K562 (cell line): ENCODE measurements at regions of chr9 and their contacts with region 1.

Region 1: DNA sequence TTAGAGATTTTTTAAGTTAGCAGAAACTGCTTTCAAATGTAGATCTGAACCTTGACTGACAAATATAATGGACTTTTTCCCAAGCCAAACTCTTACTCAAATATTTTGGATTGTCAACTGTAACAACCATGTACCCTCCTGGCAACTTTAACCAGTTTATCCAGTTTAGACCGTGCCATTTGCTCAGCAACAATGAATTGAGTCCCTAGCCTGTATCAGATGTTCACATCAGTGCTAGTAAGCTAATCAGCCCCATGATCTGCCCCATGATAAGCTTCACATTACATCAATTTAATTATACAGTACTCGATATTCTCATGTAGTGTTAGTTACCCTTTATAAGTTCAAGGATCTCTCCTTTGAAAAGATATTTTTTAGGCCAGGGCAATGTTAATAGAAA is 276.4 kb upstream of the TRPM3 start:
- DNase-seq: no peak
- ATAC-seq: no peak
- H3K4me3 ChIP-seq: no peak overlapping the region
- H3K27ac ChIP-seq: no peak overlapping the region
- H3K4me1 ChIP-seq: no peaks in the 10 kb centered on the region
- H3K27me3 ChIP-seq: no peaks in the 10 kb centered on the region
- CTCF ChIP-seq: no peak
- EP300 ChIP-seq: no peak
- POLR2A ChIP-seq: no peak
- RAD21 ChIP-seq: no peak

Region 2: DNA sequence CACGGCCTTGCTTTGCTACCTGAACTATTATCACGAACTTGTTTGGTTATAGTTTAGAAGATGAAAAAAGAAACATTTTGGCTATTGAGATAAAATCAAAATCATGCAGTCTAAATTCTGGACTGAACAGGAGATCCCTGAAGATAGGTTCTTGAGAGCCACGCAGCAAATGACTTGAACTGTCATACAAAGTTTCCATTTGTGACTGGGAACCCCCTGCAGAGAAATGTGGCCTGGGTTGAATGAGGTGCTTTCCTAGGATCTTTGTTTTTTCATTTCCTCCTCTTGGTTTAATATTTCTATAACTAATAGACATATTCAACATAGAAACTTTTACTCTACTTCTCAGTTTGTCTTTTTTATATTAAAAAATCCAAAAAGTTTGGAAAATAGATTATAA is 91.7 kb before region 1 on chr9:
- CTCF ChIA-PET with region 1: no interaction called
- POLR2A ChIA-PET with region 1: no interaction called
- in situ Hi-C with region 1: no loop called
- intact Hi-C with region 1: loop called (anchors 10 kb)
- DNase-seq: no peak
- ATAC-seq: no peak
- H3K4me3 ChIP-seq: no peak overlapping the region
- H3K27ac ChIP-seq: no peak overlapping the region
- H3K4me1 ChIP-seq: no peaks in the 10 kb centered on the region
- H3K27me3 ChIP-seq: no peaks in the 10 kb centered on the region
- CTCF ChIP-seq: no peak
- EP300 ChIP-seq: no peak
- POLR2A ChIP-seq: no peak
- RAD21 ChIP-seq: no peak

Region 3: GRCh38 chr9:71353720-71354119 is 44.1 kb before region 1 on chr9:
- CTCF ChIA-PET with region 1: no interaction called
- POLR2A ChIA-PET with region 1: no interaction called
- in situ Hi-C with region 1: no loop called
- intact Hi-C with region 1: no loop called
- DNase-seq: no peak
- ATAC-seq: no peak
- H3K4me3 ChIP-seq: no peak overlapping the region
- H3K27ac ChIP-seq: no peak overlapping the region
- H3K4me1 ChIP-seq: no peaks in the 10 kb centered on the region
- H3K27me3 ChIP-seq: no peaks in the 10 kb centered on the region
- CTCF ChIP-seq: no peak
- EP300 ChIP-seq: no peak
- POLR2A ChIP-seq: no peak
- RAD21 ChIP-seq: no peak

Region 4: DNA sequence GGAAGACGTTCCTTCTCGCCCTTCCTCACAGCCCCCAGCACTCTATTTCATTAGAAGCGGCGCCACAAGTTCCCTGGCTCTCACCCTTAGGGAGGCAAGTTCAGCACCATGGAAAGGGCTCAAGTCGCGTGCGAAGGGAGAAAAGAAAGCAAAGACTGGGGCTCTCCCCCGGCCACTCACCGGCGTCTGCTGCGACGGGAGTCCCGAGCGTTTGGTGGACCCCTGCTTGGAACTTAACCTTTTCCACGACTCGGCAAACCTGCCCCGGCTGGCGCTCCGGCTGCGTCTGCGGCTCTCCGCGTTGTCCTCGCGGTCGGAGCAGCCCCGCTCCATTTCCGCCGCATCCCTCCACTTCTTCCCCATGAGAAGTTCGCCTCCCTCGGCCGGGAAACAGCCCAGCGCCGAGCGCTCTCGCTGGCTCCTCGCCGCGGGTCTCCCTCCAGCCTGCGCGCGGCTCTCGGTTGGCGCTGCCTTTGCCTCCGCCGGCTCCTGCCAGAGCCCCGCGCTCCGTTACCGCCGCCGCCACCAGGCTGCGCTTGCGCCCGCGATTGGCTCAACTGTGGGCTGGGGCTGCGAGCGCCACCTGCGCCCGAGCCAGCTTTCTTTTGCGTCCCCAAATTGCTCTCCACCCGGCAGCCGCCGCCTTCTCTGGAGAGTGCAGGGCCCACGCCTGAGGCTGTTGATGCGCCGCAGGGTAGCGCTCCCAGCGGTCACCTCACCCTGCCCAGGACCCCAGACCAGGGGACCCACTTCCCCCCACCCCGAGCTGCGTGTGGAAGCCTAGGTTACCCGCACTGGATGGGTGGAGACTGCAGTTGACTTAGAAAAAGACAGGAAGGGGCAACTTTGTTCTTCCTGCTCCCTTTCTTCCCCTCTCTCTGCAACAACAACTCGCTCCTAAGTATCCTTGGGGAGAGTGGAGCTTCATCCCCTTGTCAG is 48.9 kb after region 1 on chr9:
- CTCF ChIA-PET with region 1: no interaction called
- POLR2A ChIA-PET with region 1: no interaction called
- in situ Hi-C with region 1: no loop called
- intact Hi-C with region 1: no loop called
- DNase-seq: peak in 3 of 4 experiments; percentile 3 to 16 (median 15)
- ATAC-seq: peak; percentile 84
- H3K4me3 ChIP-seq: no peak overlapping the region
- H3K27ac ChIP-seq: no peak overlapping the region
- H3K4me1 ChIP-seq: peaks cover 0 to 7% of the 10 kb centered on the region in 2 experiments; a peak in 1 of 5 replicates
- H3K27me3 ChIP-seq: peaks cover 2 to 10% of the 10 kb centered on the region in 2 experiments; a peak in 3 of 5 replicates
- CTCF ChIP-seq: peak in 2 of 3 experiments; percentile 23 to 66; a peak in 3 of 6 replicates
- EP300 ChIP-seq: no peak
- POLR2A ChIP-seq: no peak
- RAD21 ChIP-seq: no peak

Region 5: DNA sequence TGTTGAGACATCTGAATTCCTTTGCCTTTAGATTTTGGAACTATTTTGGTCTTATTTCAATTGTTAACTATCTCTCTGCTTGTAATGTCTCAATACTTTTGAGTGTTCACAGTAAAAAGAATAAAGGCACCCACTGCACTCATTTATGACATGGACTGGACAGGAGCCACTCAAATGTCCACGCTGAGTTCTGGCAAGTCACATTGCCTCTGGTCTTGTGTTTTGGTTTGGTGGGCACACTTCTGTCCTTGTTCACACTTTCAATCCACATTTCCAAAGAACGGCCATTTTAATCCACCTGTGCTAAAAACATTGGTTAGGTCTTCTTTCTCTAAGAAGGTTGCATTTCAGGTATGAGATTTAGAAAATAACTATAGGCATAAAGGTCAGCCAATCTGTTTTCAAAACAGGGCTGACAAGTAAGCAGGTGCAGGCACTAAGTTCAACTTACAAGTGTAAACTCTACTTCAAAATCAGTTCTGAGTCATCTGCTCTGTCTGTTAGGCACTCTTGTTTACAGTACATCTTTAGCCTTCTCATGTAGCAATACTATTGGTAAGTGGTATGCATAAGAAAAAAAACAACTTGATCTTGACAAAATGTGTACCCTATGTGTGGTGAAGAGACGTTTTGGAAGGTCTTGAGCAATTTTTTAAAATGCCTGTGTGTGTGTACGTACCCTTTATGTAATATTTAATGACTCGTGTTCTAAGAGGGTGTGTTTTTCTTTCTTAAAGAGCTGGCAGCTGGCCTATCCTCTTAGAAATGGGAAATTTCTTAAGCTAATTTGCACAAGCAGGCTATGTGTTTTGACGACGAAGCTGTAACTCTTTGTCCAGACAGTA is 998.6 kb after region 1 on chr9:
- CTCF ChIA-PET with region 1: no interaction called
- POLR2A ChIA-PET with region 1: no interaction called
- in situ Hi-C with region 1: no loop called
- intact Hi-C with region 1: no loop called
- DNase-seq: no peak
- ATAC-seq: no peak
- H3K4me3 ChIP-seq: no peak overlapping the region
- H3K27ac ChIP-seq: no peak overlapping the region
- H3K4me1 ChIP-seq: no peaks in the 10 kb centered on the region
- H3K27me3 ChIP-seq: no peaks in the 10 kb centered on the region; a peak in 2 of 5 replicates
- CTCF ChIP-seq: no peak
- EP300 ChIP-seq: no peak
- POLR2A ChIP-seq: no peak
- RAD21 ChIP-seq: no peak